PC-3 (cell line): ENCODE measurements at regions of chr12 and their contacts with region 1.

Region 1: GRCh38 chr12:85872497-85873091 is 1.5 kb upstream of the NTS start:
- DNase-seq: peak; percentile 81
- ATAC-seq: peak; percentile 63
- H3K4me3 ChIP-seq: no peak overlapping the region
- H3K27ac ChIP-seq: no peak overlapping the region
- H3K4me1 ChIP-seq: no peaks in the 10 kb centered on the region
- H3K27me3 ChIP-seq: no peaks in the 10 kb centered on the region
- CTCF ChIP-seq: peak; percentile 79

Region 2: DNA sequence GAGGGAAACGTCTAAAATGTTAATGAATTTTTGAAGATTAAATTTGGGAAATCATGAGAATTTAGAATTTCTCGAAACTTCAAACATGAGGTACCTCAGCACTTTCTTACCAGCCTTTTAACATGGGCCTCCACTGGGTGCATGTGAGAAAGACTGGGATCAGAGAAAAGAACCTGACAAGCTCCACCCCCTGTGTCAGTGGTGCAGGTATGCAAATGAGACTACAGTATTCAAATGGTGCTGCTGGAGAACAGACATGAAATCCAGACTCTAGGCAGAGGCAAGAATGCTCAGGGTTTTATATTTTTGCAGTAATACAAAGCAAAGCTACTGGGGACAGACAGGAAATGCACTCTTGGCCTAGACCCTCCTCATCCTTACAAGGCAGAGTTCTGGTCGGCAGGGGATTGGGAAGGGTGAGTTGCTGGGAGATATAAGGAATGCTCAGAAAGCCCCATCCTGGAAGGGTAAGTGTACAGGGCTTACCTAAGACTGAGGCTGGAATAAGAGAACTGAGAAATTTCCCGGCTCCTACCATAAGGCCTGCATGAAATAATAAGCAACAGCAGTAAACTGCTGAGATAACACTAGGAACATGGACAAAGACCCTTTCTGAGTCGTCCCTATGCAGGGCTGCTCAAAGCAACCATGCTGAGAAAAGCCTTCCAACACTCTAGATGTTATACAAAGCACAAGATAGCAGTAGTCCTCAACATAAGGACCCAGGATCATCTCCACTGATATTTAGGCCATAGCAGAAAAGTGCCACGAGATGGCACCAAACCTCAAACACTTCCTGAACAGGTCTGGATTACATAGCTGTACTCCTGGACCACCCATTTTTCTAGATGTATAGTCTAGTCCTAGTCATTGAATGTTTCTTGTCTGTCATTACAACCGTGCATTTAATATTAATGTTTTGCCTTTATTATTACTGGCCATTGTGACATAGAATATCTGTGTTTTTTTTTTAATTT is 297.2 kb before region 1 on chr12:
- CTCF ChIA-PET with region 1: interaction called, 21 read pairs
- POLR2A ChIA-PET with region 1: no interaction called
- intact Hi-C with region 1: loop called (anchors 1 kb)
- DNase-seq: peak; percentile 81
- ATAC-seq: peak; percentile 95
- H3K4me3 ChIP-seq: no peak overlapping the region
- H3K27ac ChIP-seq: no peak overlapping the region
- H3K4me1 ChIP-seq: peaks cover 3% of the 10 kb centered on the region; the same call in 1 of the 2 replicates
- H3K27me3 ChIP-seq: no peaks in the 10 kb centered on the region
- CTCF ChIP-seq: peak; percentile 92

Region 3: GRCh38 chr12:85662207-85662602 is 210.4 kb before region 1 on chr12:
- CTCF ChIA-PET with region 1: no interaction called
- POLR2A ChIA-PET with region 1: no interaction called
- intact Hi-C with region 1: no loop called
- DNase-seq: no peak
- ATAC-seq: no peak
- H3K4me3 ChIP-seq: no peak overlapping the region
- H3K27ac ChIP-seq: no peak overlapping the region
- H3K4me1 ChIP-seq: no peaks in the 10 kb centered on the region
- H3K27me3 ChIP-seq: no peaks in the 10 kb centered on the region
- CTCF ChIP-seq: no peak

Region 4: GRCh38 chr12:85711735-85712390 is 160.7 kb before region 1 on chr12:
- CTCF ChIA-PET with region 1: no interaction called
- POLR2A ChIA-PET with region 1: no interaction called
- intact Hi-C with region 1: no loop called
- DNase-seq: no peak
- ATAC-seq: no peak
- H3K4me3 ChIP-seq: no peak overlapping the region
- H3K27ac ChIP-seq: no peak overlapping the region
- H3K4me1 ChIP-seq: no peaks in the 10 kb centered on the region
- H3K27me3 ChIP-seq: no peaks in the 10 kb centered on the region
- CTCF ChIP-seq: no peak

Region 5: GRCh38 chr12:85725991-85726390 is 146.6 kb before region 1 on chr12:
- CTCF ChIA-PET with region 1: no interaction called
- POLR2A ChIA-PET with region 1: no interaction called
- intact Hi-C with region 1: loop called (anchors 5 kb)
- DNase-seq: no peak
- ATAC-seq: peak; percentile 18
- H3K4me3 ChIP-seq: no peak overlapping the region
- H3K27ac ChIP-seq: no peak overlapping the region
- H3K4me1 ChIP-seq: no peaks in the 10 kb centered on the region
- H3K27me3 ChIP-seq: no peaks in the 10 kb centered on the region
- CTCF ChIP-seq: 0 out of 2 replicates have a peak, but pooled peaks have one; percentile 13

Region 6: GRCh38 chr12:85843606-85844285 is 28.8 kb before region 1 on chr12:
- CTCF ChIA-PET with region 1: no interaction called
- POLR2A ChIA-PET with region 1: no interaction called
- intact Hi-C with region 1: no loop called
- DNase-seq: no peak
- ATAC-seq: no peak
- H3K4me3 ChIP-seq: no peak overlapping the region
- H3K27ac ChIP-seq: no peak overlapping the region
- H3K4me1 ChIP-seq: no peaks in the 10 kb centered on the region
- H3K27me3 ChIP-seq: no peaks in the 10 kb centered on the region
- CTCF ChIP-seq: no peak